Common myeloid progenitor, CD34-positive (primary cell): ENCODE measurements at regions of chr14 and their contacts with region 1.

Region 1: GRCh38 chr14:34722717-34723545 is 8.5 kb upstream of the CFL2 start:
- DNase-seq: peak; percentile 38 to 63 (median 45)
- H3K4me3 ChIP-seq: no peak overlapping the region
- H3K27ac ChIP-seq: no peak overlapping the region
- H3K4me1 ChIP-seq: peaks cover 0 to 2% (median 0%) of the 10 kb centered on the region in 4 experiments
- H3K27me3 ChIP-seq: peaks cover 0 to 2% (median 0%) of the 10 kb centered on the region in 5 experiments

Region 2: DNA sequence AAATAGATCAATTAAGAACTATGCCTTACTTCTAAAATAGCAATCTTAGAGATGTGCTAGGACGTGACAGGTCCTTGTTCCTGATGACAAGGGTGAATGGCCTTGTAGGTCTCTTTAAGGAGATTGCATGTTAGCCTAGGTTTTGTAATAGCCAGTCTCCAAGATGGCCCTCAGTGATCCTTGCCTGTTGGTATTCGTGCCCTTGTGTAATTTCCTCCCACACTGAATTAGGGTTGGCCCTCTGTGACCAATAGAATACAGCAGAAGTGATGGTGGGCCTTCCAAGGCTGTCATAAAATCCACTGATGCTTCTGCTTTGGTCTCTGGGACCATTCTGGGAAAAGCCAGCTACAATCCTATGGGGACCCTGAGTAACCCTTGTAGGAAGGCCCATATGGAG is 54.8 kb before region 1 on chr14:
- CTCF ChIA-PET with region 1: interaction called, 71 read pairs
- POLR2A ChIA-PET with region 1: no interaction called
- DNase-seq: no peak
- H3K4me3 ChIP-seq: no peak overlapping the region
- H3K27ac ChIP-seq: no peak overlapping the region
- H3K4me1 ChIP-seq: peaks cover 4 to 12% (median 11%) of the 10 kb centered on the region in 4 experiments
- H3K27me3 ChIP-seq: no peaks in the 10 kb centered on the region

Region 3: DNA sequence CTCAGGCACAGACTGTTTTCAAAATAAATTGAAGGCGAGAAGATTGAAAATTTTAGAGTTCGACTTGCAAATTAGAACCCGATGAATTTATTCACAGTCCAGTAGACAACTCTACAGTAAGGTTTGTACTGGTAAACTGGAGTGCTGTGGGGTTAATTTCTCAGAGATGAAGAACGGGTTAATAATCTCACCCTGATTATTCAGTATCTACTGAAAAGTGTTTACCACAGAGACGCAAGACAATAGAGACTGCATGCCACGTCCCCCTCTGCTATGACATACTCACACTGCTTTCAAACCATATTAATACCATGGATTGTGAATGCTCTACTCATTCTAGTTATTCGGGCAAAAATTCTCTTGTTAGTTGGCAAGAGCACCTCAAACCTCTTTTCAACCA is 44.6 kb before region 1 on chr14:
- CTCF ChIA-PET with region 1: interaction called, 71 read pairs
- POLR2A ChIA-PET with region 1: no interaction called
- DNase-seq: no peak
- H3K4me3 ChIP-seq: no peak overlapping the region
- H3K27ac ChIP-seq: no peak overlapping the region
- H3K4me1 ChIP-seq: peaks cover 0 to 6% (median 0%) of the 10 kb centered on the region in 4 experiments
- H3K27me3 ChIP-seq: no peaks in the 10 kb centered on the region